ENCODE measurements at regions of chr9 and their contacts with region 1.

Region 1: GRCh38 chr9:38088006-38088925 is 19.2 kb upstream of the SHB start:
- DNase-seq: no peak
- H3K4me3 ChIP-seq: no peak overlapping the region
- CTCF ChIP-seq: peak; percentile 95

Region 2: DNA sequence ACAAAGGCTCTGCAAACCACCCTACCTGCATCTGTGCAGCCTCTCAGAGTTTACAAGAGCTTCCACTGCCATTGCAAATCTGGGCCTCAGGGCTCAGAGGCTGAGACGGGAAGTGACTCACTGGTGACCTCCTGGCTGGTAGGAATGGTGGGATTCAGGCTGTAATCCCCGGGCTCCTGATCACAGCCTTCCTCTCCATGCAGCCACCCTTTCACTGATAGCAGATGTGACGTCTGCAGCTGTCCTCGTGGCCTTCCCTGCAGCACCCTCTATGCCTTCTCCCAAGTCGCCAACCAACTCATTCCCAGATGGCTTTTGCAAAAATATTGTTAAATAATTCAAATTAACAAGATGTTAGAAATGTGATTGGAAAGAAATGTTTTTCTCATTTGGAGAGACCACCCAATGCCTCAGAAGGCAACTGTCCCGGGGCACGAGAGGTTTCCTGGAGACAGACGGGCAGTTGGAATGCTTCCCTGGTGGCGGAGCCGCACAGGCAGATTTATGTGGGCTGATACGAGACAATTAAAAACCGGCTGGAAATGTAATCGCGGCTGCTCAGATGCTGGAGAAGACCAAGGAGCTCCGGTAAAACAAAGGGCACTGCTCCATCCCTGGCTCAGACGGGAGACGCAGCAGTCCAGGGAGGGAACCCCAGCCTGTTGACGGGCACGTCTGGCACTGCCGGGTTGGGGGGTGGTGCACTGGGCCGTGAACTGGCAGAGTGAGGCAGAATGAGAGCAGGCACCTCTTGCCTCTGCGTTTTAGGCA is 150.0 kb before region 1 on chr9:
- CTCF ChIA-PET with region 1: interaction called, 17 read pairs
- POLR2A ChIA-PET with region 1: no interaction called
- DNase-seq: no peak
- H3K4me3 ChIP-seq: peak overlapping the region; percentile 18
- CTCF ChIP-seq: no peak

Region 3: DNA sequence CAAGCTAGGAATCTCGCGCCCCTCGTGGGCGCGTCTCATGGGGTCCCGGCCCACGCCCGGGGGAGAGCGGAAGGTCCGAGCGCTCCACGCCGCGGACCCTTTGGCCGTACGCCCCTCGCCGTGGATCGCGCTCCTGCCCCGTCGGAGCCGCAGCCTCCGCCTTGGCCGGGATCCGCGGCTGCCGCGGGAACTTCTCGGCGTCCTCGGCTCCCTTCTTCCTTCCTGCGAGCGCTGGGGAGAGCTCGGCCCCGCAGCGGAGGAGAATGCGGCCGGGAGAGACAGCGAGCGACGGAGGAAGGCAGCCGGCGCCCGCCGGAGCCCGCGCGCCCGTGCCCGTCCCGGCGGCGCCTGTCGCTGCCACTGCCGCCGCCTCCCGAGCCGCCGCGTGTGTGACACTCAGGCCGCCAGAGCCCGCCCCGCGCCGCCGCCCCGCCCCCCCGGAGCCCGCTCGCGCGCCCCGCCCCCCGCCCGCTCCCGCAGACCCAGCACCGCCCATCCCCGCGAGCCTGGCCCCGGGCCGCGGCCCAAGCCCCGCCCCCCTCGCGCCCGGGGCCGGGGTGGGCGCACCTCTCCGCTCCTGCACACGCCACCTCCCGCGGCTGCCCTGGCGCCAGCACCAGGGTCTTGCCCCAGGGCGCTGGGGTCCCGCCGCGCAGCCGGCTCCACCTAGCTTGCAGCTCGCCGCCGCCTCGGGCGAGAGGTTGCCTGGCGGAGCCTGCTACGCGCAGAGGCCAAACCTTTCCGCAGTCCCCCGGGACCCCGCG is 19.2 kb before region 1 on chr9 and contains the start of gene SHB:
- CTCF ChIA-PET with region 1: interaction called, 72 read pairs
- POLR2A ChIA-PET with region 1: no interaction called
- DNase-seq: no peak
- H3K4me3 ChIP-seq: peak within 1 kb of the TSS; percentile 85
- CTCF ChIP-seq: no peak

Region 4: GRCh38 chr9:38141746-38142591 is 53.7 kb after region 1 on chr9:
- CTCF ChIA-PET with region 1: interaction called, 14 read pairs
- POLR2A ChIA-PET with region 1: no interaction called
- DNase-seq: peak; percentile 40
- H3K4me3 ChIP-seq: no peak overlapping the region
- CTCF ChIP-seq: no peak

Region 5: GRCh38 chr9:38160613-38161215 is 72.4 kb after region 1 on chr9:
- CTCF ChIA-PET with region 1: interaction called, 46 read pairs
- POLR2A ChIA-PET with region 1: no interaction called
- DNase-seq: no peak
- H3K4me3 ChIP-seq: no peak overlapping the region
- CTCF ChIP-seq: peak; percentile 90

Region 6: GRCh38 chr9:38277601-38278200 is 189.4 kb after region 1 on chr9:
- CTCF ChIA-PET with region 1: no interaction called
- POLR2A ChIA-PET with region 1: no interaction called
- DNase-seq: no peak
- H3K4me3 ChIP-seq: no peak overlapping the region
- CTCF ChIP-seq: no peak

Measured in AG04449 (cell line).